AG04449 (cell line): ENCODE measurements at regions of chr1 and their contacts with region 1.

Region 1: GRCh38 chr1:209490013-209490412 is 93.5 kb upstream of the CAMK1G start:
- DNase-seq: no peak
- H3K4me3 ChIP-seq: no peak overlapping the region
- CTCF ChIP-seq: peak; percentile 44

Region 2: GRCh38 chr1:208652296-208653160 is 837.5 kb before region 1 on chr1:
- CTCF ChIA-PET with region 1: interaction called, 15 read pairs
- POLR2A ChIA-PET with region 1: no interaction called
- DNase-seq: peak; percentile 28
- H3K4me3 ChIP-seq: no peak overlapping the region
- CTCF ChIP-seq: peak; percentile 78

Region 3: DNA sequence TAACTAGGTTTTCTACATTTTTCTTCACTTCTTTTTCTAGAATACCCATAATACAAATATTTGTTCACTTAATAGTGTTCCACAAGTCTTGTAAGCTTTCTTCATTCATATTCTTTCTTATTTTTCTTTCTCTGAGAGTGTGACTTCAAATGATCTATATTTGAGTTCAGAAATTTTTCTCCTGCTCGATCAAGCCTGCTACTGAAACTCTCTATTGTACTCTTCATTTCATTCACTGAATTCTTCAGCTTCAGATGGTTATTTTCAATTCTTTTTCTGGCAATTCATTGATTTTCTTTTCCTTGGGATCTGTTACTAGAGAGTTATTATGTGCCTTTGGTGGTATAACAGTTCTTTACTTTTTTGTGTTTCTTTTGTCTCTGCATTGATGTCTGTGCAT is 11.0 kb after region 1 on chr1:
- CTCF ChIA-PET with region 1: interaction called, 14 read pairs
- POLR2A ChIA-PET with region 1: no interaction called
- DNase-seq: no peak
- H3K4me3 ChIP-seq: no peak overlapping the region
- CTCF ChIP-seq: no peak

Region 4: DNA sequence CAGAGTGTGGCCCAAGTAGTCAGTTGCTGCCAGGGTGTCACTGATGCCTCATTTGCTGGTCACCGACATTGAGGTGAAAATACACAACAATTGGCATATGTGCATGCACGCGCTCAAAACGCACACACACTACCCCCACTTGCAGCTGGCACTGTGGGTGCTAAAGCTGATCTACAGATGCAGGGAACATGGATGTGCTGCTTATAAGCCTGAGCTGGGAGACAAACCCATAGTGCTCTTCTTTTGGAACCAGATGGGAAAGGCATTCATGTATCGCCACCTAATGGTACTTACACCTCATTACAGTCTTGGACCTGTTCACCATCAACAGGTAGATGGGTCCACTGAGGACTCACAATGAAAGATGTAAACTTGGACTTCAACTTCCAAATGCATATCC is 23.2 kb after region 1 on chr1:
- CTCF ChIA-PET with region 1: interaction called, 10 read pairs
- POLR2A ChIA-PET with region 1: no interaction called
- DNase-seq: no peak
- H3K4me3 ChIP-seq: no peak overlapping the region
- CTCF ChIP-seq: peak; percentile 63

Region 5: DNA sequence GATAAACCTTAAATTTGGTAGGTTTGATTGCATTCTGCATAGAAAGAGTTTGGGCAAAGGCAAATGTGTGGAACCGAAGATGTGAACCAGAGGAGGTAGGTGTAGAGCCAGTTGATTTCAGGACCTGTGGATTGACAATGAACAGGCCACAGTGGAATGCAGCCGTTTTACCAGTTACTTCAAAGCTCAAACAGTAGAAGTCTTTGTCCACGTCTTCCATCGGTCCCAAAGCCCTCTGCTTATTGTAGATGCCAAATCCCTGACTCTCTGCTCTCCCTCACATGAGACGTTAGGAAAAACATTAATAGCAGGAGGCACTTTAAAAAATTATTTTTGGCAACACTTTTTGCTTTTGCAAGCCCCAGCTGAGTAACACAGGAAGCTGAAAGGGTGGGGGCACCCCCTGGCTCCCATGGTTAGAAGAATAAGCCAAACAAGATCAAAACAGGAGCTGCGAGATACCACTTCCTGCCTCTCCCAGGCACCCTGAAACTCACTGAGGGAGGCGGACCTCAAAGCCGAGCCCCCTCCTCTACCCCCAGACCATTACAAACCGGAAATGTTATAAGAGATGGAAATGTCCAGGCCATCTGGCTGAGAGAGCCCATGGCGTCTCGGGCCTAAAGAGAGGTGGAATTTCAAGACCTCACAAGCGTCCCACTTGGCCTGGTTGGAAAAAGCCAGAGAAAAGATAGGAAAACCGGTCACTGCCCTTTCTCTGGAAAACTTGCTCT is 279.3 kb after region 1 on chr1:
- CTCF ChIA-PET with region 1: no interaction called
- POLR2A ChIA-PET with region 1: no interaction called
- DNase-seq: peak; percentile 77
- H3K4me3 ChIP-seq: no peak overlapping the region
- CTCF ChIP-seq: no peak

Region 6: DNA sequence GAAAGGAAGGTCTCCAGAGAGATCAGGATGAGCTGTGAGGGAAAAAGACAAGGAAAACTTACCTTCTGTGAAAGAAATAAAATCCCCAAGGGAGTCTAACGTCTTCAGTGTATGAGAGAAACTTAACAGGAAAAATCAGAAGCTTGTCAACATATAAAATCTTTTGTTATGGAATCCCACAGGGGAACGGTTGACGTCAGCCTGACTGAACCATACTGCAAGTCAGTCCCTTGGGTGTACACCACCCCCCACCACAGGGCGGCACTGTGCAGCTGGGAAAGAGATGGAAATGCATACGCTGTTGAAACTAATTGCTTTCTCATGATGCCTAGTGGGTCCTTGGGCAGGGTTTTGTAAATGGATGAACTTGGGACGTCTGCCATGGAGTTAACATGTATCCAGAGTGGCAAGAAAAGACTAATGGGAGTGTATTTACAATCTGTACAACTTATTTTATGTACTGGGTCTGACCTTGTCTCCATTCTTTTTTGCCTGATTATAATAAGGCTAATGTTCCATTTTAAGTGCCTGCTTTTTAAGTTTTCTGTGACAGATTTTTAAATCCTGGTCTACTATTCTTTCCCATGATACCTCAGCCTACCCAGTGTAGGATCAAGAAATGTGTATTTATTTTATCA is 360.4 kb after region 1 on chr1:
- CTCF ChIA-PET with region 1: no interaction called
- POLR2A ChIA-PET with region 1: no interaction called
- DNase-seq: peak; percentile 77
- H3K4me3 ChIP-seq: no peak overlapping the region
- CTCF ChIP-seq: peak; percentile 86